Dendritic cell treated with granulocyte-macrophage colony-stimulating factor and Interleukin-4, amounts not matched to agents 40 ng/mL and 50 ng/mL, for 4 days (primary cell): ENCODE measurements at regions of chr2 and their contacts with region 1.

Region 1: DNA sequence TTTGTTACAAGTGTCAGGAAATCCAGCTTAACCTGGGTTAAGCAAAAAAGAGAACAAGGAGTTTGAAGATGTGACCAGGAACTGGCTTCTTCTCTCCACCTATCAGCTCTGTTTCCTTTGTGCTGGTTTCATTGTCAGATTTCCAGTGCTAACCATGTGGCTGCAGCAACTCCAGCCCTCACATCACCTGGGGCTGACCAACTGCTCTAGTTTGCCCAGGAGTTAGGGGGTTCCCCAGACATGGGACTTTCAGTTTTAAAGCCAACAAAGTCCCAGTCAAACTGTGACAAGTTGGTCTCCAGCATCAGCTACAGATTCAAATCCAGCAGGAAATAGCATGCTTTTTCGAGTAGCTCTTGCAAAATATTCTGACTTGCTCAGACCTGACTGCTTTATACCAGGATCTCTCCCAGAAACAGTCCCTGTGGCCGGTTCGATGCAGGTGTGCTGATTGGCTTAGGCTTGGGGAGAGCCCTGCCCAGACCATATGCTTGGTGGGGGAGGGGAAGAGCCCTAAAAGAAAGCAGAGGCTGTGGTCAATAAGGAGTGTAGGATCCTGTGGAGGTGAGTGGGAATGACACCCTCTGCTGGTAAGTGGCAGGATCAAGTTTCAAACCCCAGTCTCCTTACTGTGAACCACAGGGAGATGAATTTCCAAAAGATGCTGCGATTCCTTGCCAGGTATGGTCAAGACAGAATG is 49.5 kb downstream of the KCNE4 start:
- H3K4me3 Mint-ChIP-seq: no peak overlapping the region
- H3K27ac Mint-ChIP-seq: no peak overlapping the region
- H3K4me1 Mint-ChIP-seq: no peaks in the 10 kb centered on the region
- H3K27me3 Mint-ChIP-seq: no peaks in the 10 kb centered on the region

Region 2: DNA sequence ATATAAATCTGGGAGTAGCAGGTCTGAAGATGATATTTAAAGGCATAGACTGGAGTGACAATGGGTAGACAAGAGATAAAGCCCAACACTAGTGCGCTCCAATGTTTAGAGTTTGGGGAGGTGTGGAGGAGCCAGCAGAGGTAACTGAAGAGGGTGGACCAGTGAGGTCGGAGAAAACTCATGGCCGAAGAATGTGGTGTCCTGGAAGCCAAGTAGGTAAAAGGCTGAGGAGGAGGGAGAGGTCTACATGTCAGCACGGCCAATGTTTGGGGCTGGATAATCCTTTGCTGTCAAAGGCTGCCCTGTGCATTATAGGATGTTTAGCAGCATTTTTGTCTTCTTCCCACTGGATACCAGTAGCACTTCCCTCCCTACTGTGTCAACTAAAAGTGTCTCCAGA is 128.3 kb before region 1 on chr2:
- intact Hi-C with region 1: loop called (anchors 5 kb)
- H3K4me3 Mint-ChIP-seq: no peak overlapping the region
- H3K27ac Mint-ChIP-seq: no peak overlapping the region
- H3K4me1 Mint-ChIP-seq: peaks cover 12% of the 10 kb centered on the region
- H3K27me3 Mint-ChIP-seq: peaks cover 6% of the 10 kb centered on the region